ENCODE measurements at regions of chr2 and their contacts with region 1.

Region 1: GRCh38 chr2:1817256-1818051 is 73.1 kb upstream of the PXDN start:
- DNase-seq: peak; percentile 82
- H3K4me3 ChIP-seq: no peak overlapping the region
- H3K27ac ChIP-seq: peak overlapping the region; percentile 74 to 75
- H3K4me1 ChIP-seq: peaks cover 7% of the 10 kb centered on the region
- H3K27me3 ChIP-seq: no peaks in the 10 kb centered on the region
- CTCF ChIP-seq: peak; percentile 78 to 90 (median 86)
- POLR2A ChIP-seq: no peak

Region 2: GRCh38 chr2:264660-265468 is 1552.6 kb before region 1 on chr2 and contains the start of gene ACP1:
- intact Hi-C with region 1: loop called (anchors 10 kb)
- DNase-seq: peak; percentile 98
- H3K4me3 ChIP-seq: peak within 1 kb of the TSS; percentile 72 to 80
- H3K27ac ChIP-seq: peak within 1 kb of the TSS; percentile 92 to 93
- H3K4me1 ChIP-seq: no peaks in the 10 kb centered on the region
- H3K27me3 ChIP-seq: no peaks in the 10 kb centered on the region
- CTCF ChIP-seq: peak in 2 of 4 experiments; percentile 34
- POLR2A ChIP-seq: peak; percentile 96
- total RNA-seq, gene ACP1: 96.9 to 116 TPM

Region 3: DNA sequence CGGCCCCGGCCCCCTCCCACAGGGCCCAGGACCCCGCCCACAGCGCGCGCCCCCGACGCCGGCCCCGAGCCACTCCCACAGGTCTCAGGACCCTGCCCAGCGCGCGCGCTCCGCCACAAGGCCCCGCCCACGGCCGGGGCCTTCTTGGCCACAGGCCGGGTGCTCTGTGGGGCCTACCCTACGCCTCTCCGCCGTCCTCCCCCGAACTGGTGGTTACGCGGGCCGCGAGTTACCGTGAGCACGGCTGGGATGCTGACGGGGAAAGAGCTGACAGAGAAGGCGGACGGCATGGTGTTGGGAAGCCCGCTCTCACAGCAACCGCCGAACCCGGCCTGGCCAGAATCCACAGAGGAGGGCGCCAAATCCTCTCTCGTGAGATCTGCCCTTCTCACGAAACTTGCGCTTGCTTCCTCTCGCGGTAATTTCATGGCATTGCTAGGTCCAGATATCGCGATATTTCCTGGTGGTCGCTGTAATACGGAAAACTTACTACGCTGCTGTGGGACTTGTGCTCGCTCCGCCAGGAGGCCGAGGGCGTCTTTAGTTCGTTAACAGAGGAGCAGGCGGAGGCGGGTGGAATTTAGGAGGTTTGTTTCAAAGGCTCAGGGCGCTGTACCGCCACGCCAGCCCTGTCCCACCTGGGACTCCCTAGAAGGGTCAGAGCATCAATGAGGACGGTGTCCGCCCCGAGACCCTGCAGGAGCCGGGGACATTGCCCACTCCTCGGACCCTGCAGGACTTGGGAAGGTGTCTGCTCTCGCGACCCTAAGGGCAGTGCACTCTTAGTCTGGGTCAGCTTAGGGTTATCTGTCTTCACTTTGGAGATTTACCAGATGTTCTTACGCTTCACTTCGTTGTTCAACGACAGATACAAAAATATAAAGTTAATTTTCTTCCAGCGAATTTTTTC is 1140.1 kb before region 1 on chr2 and contains the start of gene TMEM18:
- intact Hi-C with region 1: loop called (anchors 5 kb)
- DNase-seq: peak; percentile 95
- H3K4me3 ChIP-seq: peak within 1 kb of the TSS; percentile 57 to 72
- H3K27ac ChIP-seq: peak within 1 kb of the TSS; percentile 95 to 98
- H3K4me1 ChIP-seq: no peaks in the 10 kb centered on the region
- H3K27me3 ChIP-seq: no peaks in the 10 kb centered on the region
- CTCF ChIP-seq: peak in 2 of 4 experiments; percentile 54 to 66
- POLR2A ChIP-seq: peak; percentile 72
- total RNA-seq, gene TMEM18: 17.7 to 19.3 TPM

Region 4: GRCh38 chr2:1550658-1551316 is 266.7 kb before region 1 on chr2:
- intact Hi-C with region 1: loop called (anchors 5 kb)
- DNase-seq: peak; percentile 33
- H3K4me3 ChIP-seq: no peak overlapping the region
- H3K27ac ChIP-seq: no peak overlapping the region
- H3K4me1 ChIP-seq: no peaks in the 10 kb centered on the region
- H3K27me3 ChIP-seq: no peaks in the 10 kb centered on the region
- CTCF ChIP-seq: peak; percentile 70 to 88 (median 85)
- POLR2A ChIP-seq: no peak

Region 5: GRCh38 chr2:1591978-1592907 is 225.2 kb before region 1 on chr2:
- intact Hi-C with region 1: loop called (anchors 5 kb)
- DNase-seq: peak; percentile 82
- H3K4me3 ChIP-seq: no peak overlapping the region
- H3K27ac ChIP-seq: no peak overlapping the region
- H3K4me1 ChIP-seq: peaks cover 2% of the 10 kb centered on the region
- H3K27me3 ChIP-seq: no peaks in the 10 kb centered on the region
- CTCF ChIP-seq: peak; percentile 54 to 91 (median 74)
- POLR2A ChIP-seq: no peak

Region 6: GRCh38 chr2:1681323-1682180 is 135.9 kb before region 1 on chr2:
- intact Hi-C with region 1: loop called (anchors 2 kb)
- DNase-seq: peak; percentile 46
- H3K4me3 ChIP-seq: no peak overlapping the region
- H3K27ac ChIP-seq: peak overlapping the region; percentile 60 to 70
- H3K4me1 ChIP-seq: peaks cover 5% of the 10 kb centered on the region
- H3K27me3 ChIP-seq: no peaks in the 10 kb centered on the region
- CTCF ChIP-seq: no peak
- POLR2A ChIP-seq: no peak